Spleen (tissue), 13 donors: ENCODE measurements at regions of chr5 and their contacts with region 1.

Region 1: DNA sequence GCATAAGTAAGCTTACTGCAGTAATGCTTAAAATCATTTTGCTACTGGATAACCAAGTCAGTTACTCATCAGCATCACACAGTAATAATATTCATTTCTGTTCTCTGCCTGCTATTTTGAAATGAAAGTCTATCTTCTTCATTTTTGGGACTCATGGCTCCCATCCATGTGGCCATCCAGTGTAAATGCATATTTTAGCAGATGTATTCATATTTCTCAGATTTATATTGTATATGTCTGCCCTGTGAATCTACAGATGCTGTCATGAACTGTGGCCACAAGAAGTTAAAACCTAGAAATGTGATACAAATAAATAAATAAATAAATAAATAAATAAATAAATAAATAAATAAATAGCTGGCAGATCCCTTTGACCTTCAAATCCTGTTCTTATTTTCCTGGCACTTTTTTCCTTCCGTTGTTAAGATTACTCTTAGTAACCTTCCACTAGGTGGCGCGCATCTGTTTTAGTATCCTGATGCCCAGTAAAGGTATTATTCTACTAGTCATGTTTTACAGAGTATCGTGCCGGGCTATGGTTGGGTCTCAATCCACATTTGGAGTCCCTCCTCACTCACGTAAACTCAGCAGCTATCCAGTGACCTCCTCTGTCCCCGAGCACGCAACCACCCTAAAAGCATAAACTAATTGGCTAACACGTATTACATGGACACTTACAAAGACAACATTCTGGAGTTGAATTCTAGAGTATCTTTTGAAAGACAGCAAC is 79.2 kb upstream of the IL7R start:
- DNase-seq: no peak
- H3K4me3 ChIP-seq: no peak overlapping the region
- H3K27ac ChIP-seq: peak overlapping the region in 2 of 8 donors; percentile 13 to 56
- H3K4me1 ChIP-seq: peaks cover 0 to 31% (median 15%) of the 10 kb centered on the region in 6 donors
- H3K27me3 ChIP-seq: no peaks in the 10 kb centered on the region
- CTCF ChIP-seq: peak in 10 of 11 experiments; percentile 27 to 67 (median 54)
- POLR2A ChIP-seq: no peak

Region 2: GRCh38 chr5:35651002-35651756 is 126.3 kb before region 1 on chr5:
- intact Hi-C with region 1: loop called (anchors 10 kb)
- DNase-seq: no peak
- H3K4me3 ChIP-seq: no peak overlapping the region
- H3K27ac ChIP-seq: no peak overlapping the region
- H3K4me1 ChIP-seq: no peaks in the 10 kb centered on the region
- H3K27me3 ChIP-seq: no peaks in the 10 kb centered on the region
- CTCF ChIP-seq: peak in 9 of 11 experiments; percentile 44 to 59 (median 52)
- POLR2A ChIP-seq: no peak